T-cell (primary cell): ENCODE measurements at regions of chr3 and their contacts with region 1.

Region 1: DNA sequence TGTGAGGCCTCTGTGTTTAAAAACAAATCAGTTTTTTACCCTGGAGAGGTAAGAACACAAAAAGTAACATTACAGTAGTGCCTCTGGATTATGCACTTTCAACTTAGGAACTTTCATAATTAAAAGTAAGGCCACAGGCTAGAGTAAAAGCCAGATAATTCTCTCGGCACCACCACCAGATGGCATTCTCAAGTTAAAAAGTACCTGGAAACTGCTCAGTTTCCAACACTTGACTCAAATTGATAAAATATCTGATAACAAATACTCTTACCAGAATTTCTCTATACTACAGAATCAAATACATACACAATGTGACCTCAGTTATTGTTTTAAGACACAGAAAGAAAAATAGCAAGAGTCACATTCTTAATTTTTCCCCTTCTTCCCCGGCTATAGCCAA is 19.9 kb downstream of the SPICE1 start:
- DNase-seq: peak in 26 of 35 experiments; percentile 3 to 66 (median 31)
- ATAC-seq: peak; percentile 50 to 64 (median 58)
- H3K4me3 ChIP-seq: no peak overlapping the region
- H3K4me3 Mint-ChIP-seq: no peak overlapping the region
- H3K27ac ChIP-seq: no peak overlapping the region
- H3K27ac Mint-ChIP-seq: no peak overlapping the region
- H3K4me1 ChIP-seq: no peaks in the 10 kb centered on the region
- H3K4me1 Mint-ChIP-seq: peaks cover 0 to 7% (median 2%) of the 10 kb centered on the region in 3 donors
- H3K27me3 ChIP-seq: no peaks in the 10 kb centered on the region
- H3K27me3 Mint-ChIP-seq: no peaks in the 10 kb centered on the region

Region 2: GRCh38 chr3:113514265-113514769 is 19.3 kb after region 1 on chr3:
- CTCF ChIA-PET with region 1: interaction called, 15 to 66 read pairs
- POLR2A ChIA-PET with region 1: interaction called, 3 to 8 read pairs
- DNase-seq: no peak
- ATAC-seq: peak in 1 of 4 experiments; percentile 4
- H3K4me3 ChIP-seq: peak overlapping the region; percentile 91 to 94
- H3K4me3 Mint-ChIP-seq: no peak overlapping the region
- H3K27ac ChIP-seq: peak overlapping the region; percentile 87
- H3K27ac Mint-ChIP-seq: no peak overlapping the region
- H3K4me1 ChIP-seq: peaks cover 13 to 15% of the 10 kb centered on the region in 2 experiments
- H3K4me1 Mint-ChIP-seq: peaks cover 19 to 23% (median 21%) of the 10 kb centered on the region in 3 donors
- H3K27me3 ChIP-seq: peaks cover 0 to 4% of the 10 kb centered on the region in 2 experiments
- H3K27me3 Mint-ChIP-seq: peaks cover 7 to 22% of the 10 kb centered on the region in 2 donors

Region 3: DNA sequence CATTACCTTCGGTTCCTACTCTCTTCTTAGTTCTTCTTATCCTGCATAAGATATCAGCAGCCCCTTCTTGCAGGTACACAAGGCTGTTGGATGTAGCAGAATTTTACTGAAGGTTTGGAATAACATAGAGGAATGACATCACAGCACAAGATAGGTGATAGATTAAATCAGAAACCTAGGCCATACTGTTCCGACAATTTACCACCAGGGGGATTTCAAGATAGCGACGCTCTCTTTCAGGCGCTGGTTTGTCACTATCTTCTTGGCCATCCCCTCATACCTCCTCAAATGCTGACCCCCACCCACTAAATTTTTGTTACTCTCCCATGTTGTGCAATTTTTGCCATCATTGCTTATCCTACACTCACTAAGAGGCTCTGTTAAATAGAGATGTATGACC is 40.9 kb after region 1 on chr3:
- CTCF ChIA-PET with region 1: interaction called, 9 to 11 read pairs
- POLR2A ChIA-PET with region 1: interaction called in 1 of 2 experiments, 4 read pairs
- DNase-seq: peak in 1 of 35 experiments; percentile 46
- ATAC-seq: no peak
- H3K4me3 ChIP-seq: no peak overlapping the region
- H3K4me3 Mint-ChIP-seq: peak overlapping the region; percentile 34 to 57 (median 37)
- H3K27ac ChIP-seq: no peak overlapping the region
- H3K27ac Mint-ChIP-seq: peak overlapping the region in 1 of 2 donors; percentile 30
- H3K4me1 ChIP-seq: peaks cover 22 to 33% of the 10 kb centered on the region in 2 experiments
- H3K4me1 Mint-ChIP-seq: peaks cover 70 to 75% (median 71%) of the 10 kb centered on the region in 3 donors
- H3K27me3 ChIP-seq: no peaks in the 10 kb centered on the region
- H3K27me3 Mint-ChIP-seq: no peaks in the 10 kb centered on the region

Region 4: GRCh38 chr3:113552851-113553250 is 57.8 kb after region 1 on chr3:
- CTCF ChIA-PET with region 1: interaction called, 14 to 17 read pairs
- POLR2A ChIA-PET with region 1: interaction called in 1 of 2 experiments, 3 read pairs
- DNase-seq: peak in 29 of 35 experiments; percentile 6 to 64 (median 31)
- ATAC-seq: peak; percentile 67 to 93 (median 72)
- H3K4me3 ChIP-seq: no peak overlapping the region
- H3K4me3 Mint-ChIP-seq: no peak overlapping the region
- H3K27ac ChIP-seq: no peak overlapping the region
- H3K27ac Mint-ChIP-seq: no peak overlapping the region
- H3K4me1 ChIP-seq: peaks cover 0 to 7% of the 10 kb centered on the region in 2 experiments
- H3K4me1 Mint-ChIP-seq: peaks cover 41 to 60% (median 55%) of the 10 kb centered on the region in 3 donors
- H3K27me3 ChIP-seq: no peaks in the 10 kb centered on the region
- H3K27me3 Mint-ChIP-seq: no peaks in the 10 kb centered on the region

Region 5: DNA sequence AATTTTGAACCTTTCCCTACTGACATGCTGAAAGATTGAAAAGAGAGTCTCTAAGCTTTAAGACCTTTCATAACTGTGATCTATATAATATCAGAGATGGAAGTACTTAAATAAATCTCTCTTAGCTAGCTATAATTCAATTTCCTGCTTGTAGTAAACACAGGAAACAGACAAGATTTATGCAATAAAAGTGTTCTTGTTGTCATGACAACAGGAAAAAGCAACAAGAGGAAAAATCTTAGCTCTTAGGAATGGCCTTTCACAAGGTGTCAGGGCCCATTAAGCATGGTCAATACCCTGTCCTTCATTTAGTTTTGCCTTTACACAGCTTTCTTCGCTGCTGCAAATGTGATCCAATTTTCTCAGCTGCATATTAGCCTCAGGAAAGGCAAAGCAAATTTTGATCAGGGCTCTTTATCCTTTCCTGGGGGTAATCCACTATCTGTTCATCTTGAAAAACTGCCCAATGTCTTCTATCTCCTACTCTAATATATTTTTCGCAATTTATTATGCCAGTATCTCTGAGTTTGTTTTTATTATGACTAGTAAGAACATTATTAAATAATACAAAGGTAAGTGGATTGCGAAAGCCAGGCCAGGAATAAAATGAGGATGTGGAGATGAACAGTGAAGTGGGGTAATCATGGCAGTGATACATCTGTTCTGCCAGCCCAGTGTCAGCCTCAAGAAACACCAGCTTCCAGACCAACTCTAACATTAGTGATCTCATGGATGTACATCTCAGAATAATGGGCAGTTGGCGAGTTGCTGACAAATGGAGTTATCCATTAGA is 66.0 kb after region 1 on chr3:
- CTCF ChIA-PET with region 1: interaction called, 13 to 19 read pairs
- POLR2A ChIA-PET with region 1: interaction called, 3 to 6 read pairs
- DNase-seq: peak in 1 of 35 experiments; percentile 51
- ATAC-seq: peak in 1 of 4 experiments; percentile 45
- H3K4me3 ChIP-seq: no peak overlapping the region
- H3K4me3 Mint-ChIP-seq: peak overlapping the region in 1 of 3 donors; percentile 27
- H3K27ac ChIP-seq: peak overlapping the region; percentile 27
- H3K27ac Mint-ChIP-seq: peak overlapping the region; percentile 49 to 75
- H3K4me1 ChIP-seq: peaks cover 7 to 12% of the 10 kb centered on the region in 2 experiments
- H3K4me1 Mint-ChIP-seq: peaks cover 52 to 68% (median 60%) of the 10 kb centered on the region in 3 donors
- H3K27me3 ChIP-seq: no peaks in the 10 kb centered on the region
- H3K27me3 Mint-ChIP-seq: no peaks in the 10 kb centered on the region

Region 6: DNA sequence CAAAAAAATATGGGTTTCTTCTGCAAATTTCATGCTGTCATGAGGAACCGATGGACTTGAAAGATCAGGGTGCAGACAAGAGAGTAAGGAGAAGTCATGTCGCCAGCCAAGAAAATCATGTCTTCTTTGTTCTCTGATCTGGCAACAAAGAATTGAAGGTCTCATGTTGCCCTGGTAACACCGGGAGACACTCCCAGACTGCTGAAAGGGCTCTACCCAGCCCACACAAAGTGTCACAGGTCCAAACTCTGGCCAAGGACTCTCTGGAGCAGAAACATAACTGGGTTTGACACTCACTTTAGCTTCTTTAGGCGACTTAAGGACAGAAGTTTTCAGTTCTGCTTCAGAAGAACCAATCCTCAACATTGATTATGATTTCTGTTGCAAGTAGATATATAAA is 80.2 kb after region 1 on chr3:
- CTCF ChIA-PET with region 1: interaction called, 60 to 83 read pairs
- POLR2A ChIA-PET with region 1: interaction called in 1 of 2 experiments, 3 read pairs
- DNase-seq: no peak
- ATAC-seq: no peak
- H3K4me3 ChIP-seq: no peak overlapping the region
- H3K4me3 Mint-ChIP-seq: no peak overlapping the region
- H3K27ac ChIP-seq: no peak overlapping the region
- H3K27ac Mint-ChIP-seq: peak overlapping the region; percentile 62 to 73
- H3K4me1 ChIP-seq: no peaks in the 10 kb centered on the region
- H3K4me1 Mint-ChIP-seq: peaks cover 9 to 11% (median 9%) of the 10 kb centered on the region in 3 donors
- H3K27me3 ChIP-seq: no peaks in the 10 kb centered on the region
- H3K27me3 Mint-ChIP-seq: no peaks in the 10 kb centered on the region